Activated CD4-positive, alpha-beta T cell treated with anti-CD3 and anti-CD28 coated beads, Interleukin-2, amount 10 ng/mL, durations not matched to agents 24 days and 14 days (primary cell): ENCODE measurements at regions of chr2 and their contacts with region 1.

Region 1: GRCh38 chr2:206085742-206086445 is at the start of gene INO80D:
- DNase-seq: peak; percentile 93
- H3K4me3 Mint-ChIP-seq: peak within 1 kb of the TSS; percentile 100
- H3K27ac Mint-ChIP-seq: peak within 1 kb of the TSS; percentile 100
- H3K4me1 Mint-ChIP-seq: peaks cover 20% of the 10 kb centered on the region
- H3K27me3 Mint-ChIP-seq: no peaks in the 10 kb centered on the region
- total RNA-seq, gene INO80D: 26.2 and 27.5 TPM in 2 replicates

Region 2: DNA sequence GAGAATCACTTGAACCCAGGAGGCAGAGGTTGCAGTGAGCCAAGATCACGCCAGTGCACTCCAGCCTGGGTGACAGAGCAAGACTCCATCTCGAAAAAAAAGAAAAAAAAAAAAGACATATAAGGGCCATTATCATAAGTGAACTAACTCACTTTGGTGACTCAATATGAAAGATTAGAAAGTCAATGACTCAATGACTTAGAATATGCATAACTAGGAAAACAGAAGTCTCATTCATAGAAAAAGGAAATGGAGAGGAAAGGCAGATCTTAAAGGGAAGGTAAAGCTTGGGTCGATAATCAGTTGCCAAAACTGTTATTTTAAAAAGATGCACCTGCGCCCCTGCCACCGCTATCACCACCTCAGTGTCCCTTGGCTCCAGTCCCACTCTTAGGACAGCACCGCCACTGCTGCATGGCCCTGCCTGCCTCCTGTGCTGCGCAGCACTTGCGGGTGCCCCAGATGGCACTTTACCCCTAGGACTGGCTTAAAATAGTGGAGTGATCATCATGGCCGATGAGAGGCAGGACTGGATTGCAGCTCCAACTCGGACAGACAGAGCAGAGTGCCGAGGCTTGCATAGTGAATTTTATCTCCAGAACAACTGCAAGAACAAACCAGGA is 54.6 kb before region 1 on chr2:
- intact Hi-C with region 1: loop called (anchors 1 kb)
- DNase-seq: no peak
- H3K4me3 Mint-ChIP-seq: no peak overlapping the region
- H3K27ac Mint-ChIP-seq: peak overlapping the region; percentile 18
- H3K4me1 Mint-ChIP-seq: peaks cover 39% of the 10 kb centered on the region
- H3K27me3 Mint-ChIP-seq: no peaks in the 10 kb centered on the region

Region 3: GRCh38 chr2:206143451-206143850 is 57.6 kb after region 1 on chr2:
- intact Hi-C with region 1: no loop called
- DNase-seq: no peak
- H3K4me3 Mint-ChIP-seq: no peak overlapping the region
- H3K27ac Mint-ChIP-seq: no peak overlapping the region
- H3K4me1 Mint-ChIP-seq: no peaks in the 10 kb centered on the region
- H3K27me3 Mint-ChIP-seq: no peaks in the 10 kb centered on the region

Region 4: DNA sequence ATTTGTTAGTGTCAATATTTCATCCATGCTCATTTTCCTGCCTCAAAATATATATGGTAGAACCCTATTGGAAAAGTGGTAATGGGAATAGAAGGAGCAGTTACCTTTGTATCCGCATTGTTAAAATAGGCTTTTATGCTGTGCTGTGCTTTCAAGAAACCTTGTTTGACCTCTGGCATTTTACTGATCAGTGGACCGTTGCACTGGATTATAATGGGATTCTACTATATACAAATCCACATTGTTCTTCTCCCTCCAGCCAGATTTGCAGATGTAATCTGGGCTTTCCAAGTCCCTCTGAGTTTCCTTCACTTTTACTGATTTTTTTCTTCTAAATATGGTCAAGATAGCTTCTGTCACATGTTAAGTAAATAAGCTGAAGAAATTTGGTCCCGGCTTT is 533.1 kb after region 1 on chr2:
- intact Hi-C with region 1: no loop called
- DNase-seq: no peak
- H3K4me3 Mint-ChIP-seq: no peak overlapping the region
- H3K27ac Mint-ChIP-seq: no peak overlapping the region
- H3K4me1 Mint-ChIP-seq: no peaks in the 10 kb centered on the region
- H3K27me3 Mint-ChIP-seq: peaks cover 2% of the 10 kb centered on the region

Region 5: DNA sequence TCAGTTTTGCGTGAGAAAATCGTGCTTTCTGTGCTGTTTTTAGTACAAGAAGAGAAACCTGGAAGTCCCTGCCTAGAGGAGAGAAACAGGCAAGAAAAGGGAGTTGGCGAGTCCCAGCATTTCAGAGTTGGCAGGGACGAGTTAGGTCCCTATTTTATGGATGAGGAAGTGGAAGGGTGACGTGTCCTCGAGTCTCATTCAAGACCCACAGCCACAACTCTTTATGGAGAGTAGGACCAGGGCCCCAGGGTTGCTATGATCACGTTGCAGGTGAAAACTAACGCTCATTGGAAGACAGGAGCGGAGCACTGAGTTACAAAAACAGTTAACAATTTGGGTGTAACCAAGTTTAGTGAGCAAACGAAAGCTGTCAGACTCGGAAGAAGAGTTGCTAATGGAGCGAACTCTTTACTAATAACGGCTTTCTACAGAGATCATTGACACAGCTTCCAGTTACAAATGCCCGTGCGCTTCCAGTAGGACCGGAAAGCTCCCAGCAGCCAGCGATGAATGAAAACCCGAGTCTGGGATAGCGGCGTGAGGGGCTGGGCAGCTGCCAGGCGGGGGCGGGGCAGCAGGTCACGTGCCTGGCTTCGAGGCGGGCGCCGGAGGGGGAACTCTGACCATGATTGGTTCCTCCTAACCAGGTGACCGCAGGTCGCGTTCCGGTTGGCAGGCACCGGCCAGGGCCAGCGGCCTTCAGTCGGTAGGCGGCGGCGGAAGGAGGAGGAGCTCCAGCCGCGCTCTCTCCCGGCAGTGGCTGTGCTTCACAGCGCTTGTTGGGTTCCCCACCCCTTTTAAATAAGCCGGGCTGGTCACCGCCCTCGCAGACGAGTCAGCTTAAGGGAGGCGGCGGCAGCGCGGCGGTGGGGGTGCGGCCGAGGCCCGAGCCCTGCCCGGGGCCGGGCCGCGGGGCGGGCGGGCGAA is 1625.2 kb after region 1 on chr2 and contains the start of gene CCNYL1:
- intact Hi-C with region 1: loop called (anchors 10 kb)
- DNase-seq: peak; percentile 99
- H3K4me3 Mint-ChIP-seq: peak within 1 kb of the TSS; percentile 100
- H3K27ac Mint-ChIP-seq: peak within 1 kb of the TSS; percentile 88
- H3K4me1 Mint-ChIP-seq: peaks cover 23% of the 10 kb centered on the region
- H3K27me3 Mint-ChIP-seq: no peaks in the 10 kb centered on the region
- total RNA-seq, gene CCNYL1: 6.1 and 8.7 TPM in 2 replicates